ENCODE measurements at regions of chr21 and their contacts with region 1.

Region 1: GRCh38 chr21:42145569-42146272 is 73.2 kb upstream of the ABCG1 start:
- DNase-seq: peak; percentile 57
- H3K4me3 Mint-ChIP-seq: no peak overlapping the region
- H3K27ac Mint-ChIP-seq: no peak overlapping the region
- H3K4me1 Mint-ChIP-seq: no peaks in the 10 kb centered on the region
- H3K27me3 Mint-ChIP-seq: peaks cover 21% of the 10 kb centered on the region
- CTCF ChIP-seq: peak; percentile 91

Region 2: GRCh38 chr21:42025376-42026081 is 120.2 kb before region 1 on chr21:
- CTCF ChIA-PET with region 1: no interaction called
- POLR2A ChIA-PET with region 1: no interaction called
- intact Hi-C with region 1: no loop called
- DNase-seq: no peak
- H3K4me3 Mint-ChIP-seq: no peak overlapping the region
- H3K27ac Mint-ChIP-seq: no peak overlapping the region
- H3K4me1 Mint-ChIP-seq: no peaks in the 10 kb centered on the region
- H3K27me3 Mint-ChIP-seq: peaks cover 37% of the 10 kb centered on the region
- CTCF ChIP-seq: no peak

Region 3: DNA sequence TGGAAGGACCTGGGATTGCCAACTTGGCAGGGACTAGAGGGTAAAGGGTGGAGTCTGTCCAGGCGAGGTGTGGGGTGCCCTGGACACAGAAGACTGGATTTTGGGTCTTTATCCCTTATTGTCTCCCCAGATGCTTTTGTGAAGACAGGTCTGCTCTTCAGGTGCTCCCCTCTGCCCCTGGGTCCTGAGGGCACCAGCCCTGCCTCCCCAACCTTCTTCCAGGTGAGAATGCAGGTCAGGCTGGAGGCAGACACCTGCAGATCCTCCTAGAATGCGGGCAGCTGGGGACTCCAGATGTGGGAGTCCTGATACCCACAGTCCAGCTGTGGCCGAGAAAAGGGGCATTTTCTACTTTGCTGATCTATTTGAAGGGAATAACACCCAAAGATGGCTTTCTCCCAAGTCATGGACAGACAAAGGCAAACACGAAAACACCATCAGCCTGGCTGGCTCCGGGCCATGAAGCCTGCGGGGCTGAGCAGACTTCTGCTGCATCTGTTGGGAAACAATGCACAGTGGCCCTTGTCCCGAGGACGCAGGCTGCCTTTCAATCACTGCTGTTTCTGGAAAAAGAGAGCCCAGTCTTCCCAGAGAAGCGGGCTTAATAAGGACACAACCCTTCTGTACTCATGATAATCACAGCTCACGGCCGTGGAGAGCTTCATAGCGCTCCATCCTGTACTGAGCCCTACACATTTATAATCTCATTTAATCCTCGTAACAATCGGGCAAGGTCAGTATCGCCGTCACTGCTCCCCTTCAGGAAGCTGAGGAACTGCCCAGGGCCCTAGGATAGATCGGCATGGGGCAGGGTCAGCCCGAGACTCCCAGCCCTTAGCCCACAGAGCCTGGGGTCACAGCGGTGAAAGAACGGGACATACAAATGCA is 11.2 kb after region 1 on chr21:
- CTCF ChIA-PET with region 1: interaction called, 25 read pairs
- POLR2A ChIA-PET with region 1: interaction called, 4 read pairs
- intact Hi-C with region 1: no loop called
- DNase-seq: peak; percentile 54
- H3K4me3 Mint-ChIP-seq: no peak overlapping the region
- H3K27ac Mint-ChIP-seq: no peak overlapping the region
- H3K4me1 Mint-ChIP-seq: no peaks in the 10 kb centered on the region
- H3K27me3 Mint-ChIP-seq: no peaks in the 10 kb centered on the region
- CTCF ChIP-seq: no peak

Region 4: DNA sequence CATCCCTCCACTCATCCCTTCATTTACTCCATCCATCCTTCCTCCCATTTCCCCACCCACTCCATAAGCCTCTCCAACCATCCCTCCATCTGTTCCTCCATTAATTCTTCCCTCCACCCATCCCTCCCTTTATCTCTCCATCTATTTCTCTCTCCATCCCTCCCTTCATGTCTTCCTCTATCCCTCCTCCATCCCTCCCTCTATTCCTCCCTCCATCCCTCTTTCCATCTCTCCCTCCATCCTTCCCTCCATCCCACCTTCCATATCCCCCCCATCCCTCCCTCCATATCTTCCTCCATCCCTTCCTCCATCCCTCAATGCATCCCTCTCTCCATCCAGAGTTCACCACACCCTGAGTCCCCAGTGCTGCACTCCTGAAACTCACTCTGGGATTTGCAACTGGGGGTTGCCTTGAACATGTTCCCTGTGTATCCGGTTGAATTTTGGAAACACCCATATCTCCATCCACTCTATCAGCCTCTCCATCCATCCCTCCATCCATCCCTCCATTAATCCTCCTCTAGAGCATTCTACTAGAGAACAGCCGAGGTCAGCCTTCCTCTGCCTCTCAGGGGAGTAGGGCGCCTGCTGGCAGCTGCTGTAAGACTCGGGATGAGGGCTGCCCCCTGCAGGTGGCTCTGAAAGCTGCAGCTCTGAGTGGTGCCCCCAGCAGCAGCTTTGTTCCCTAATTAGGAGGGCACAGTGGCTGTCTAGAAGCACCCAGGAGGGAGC is 112.6 kb after region 1 on chr21:
- CTCF ChIA-PET with region 1: interaction called, 26 read pairs
- POLR2A ChIA-PET with region 1: no interaction called
- intact Hi-C with region 1: loop called (anchors 1 kb)
- DNase-seq: peak; percentile 67
- H3K4me3 Mint-ChIP-seq: no peak overlapping the region
- H3K27ac Mint-ChIP-seq: no peak overlapping the region
- H3K4me1 Mint-ChIP-seq: peaks cover 14% of the 10 kb centered on the region
- H3K27me3 Mint-ChIP-seq: no peaks in the 10 kb centered on the region
- CTCF ChIP-seq: peak; percentile 87

Region 5: GRCh38 chr21:42309753-42310221 is 164.1 kb after region 1 on chr21:
- CTCF ChIA-PET with region 1: interaction called, 6 read pairs
- POLR2A ChIA-PET with region 1: no interaction called
- intact Hi-C with region 1: loop called (anchors 1 kb)
- DNase-seq: peak; percentile 48
- H3K4me3 Mint-ChIP-seq: no peak overlapping the region
- H3K27ac Mint-ChIP-seq: no peak overlapping the region
- H3K4me1 Mint-ChIP-seq: no peaks in the 10 kb centered on the region
- H3K27me3 Mint-ChIP-seq: no peaks in the 10 kb centered on the region
- CTCF ChIP-seq: peak; percentile 72

Region 6: GRCh38 chr21:42381334-42381984 is 235.7 kb after region 1 on chr21:
- CTCF ChIA-PET with region 1: interaction called, 4 read pairs
- POLR2A ChIA-PET with region 1: no interaction called
- intact Hi-C with region 1: loop called (anchors 1 kb)
- DNase-seq: peak; percentile 45
- H3K4me3 Mint-ChIP-seq: no peak overlapping the region
- H3K27ac Mint-ChIP-seq: no peak overlapping the region
- H3K4me1 Mint-ChIP-seq: peaks cover 6% of the 10 kb centered on the region
- H3K27me3 Mint-ChIP-seq: peaks cover 17% of the 10 kb centered on the region
- CTCF ChIP-seq: peak; percentile 43

Region 7: DNA sequence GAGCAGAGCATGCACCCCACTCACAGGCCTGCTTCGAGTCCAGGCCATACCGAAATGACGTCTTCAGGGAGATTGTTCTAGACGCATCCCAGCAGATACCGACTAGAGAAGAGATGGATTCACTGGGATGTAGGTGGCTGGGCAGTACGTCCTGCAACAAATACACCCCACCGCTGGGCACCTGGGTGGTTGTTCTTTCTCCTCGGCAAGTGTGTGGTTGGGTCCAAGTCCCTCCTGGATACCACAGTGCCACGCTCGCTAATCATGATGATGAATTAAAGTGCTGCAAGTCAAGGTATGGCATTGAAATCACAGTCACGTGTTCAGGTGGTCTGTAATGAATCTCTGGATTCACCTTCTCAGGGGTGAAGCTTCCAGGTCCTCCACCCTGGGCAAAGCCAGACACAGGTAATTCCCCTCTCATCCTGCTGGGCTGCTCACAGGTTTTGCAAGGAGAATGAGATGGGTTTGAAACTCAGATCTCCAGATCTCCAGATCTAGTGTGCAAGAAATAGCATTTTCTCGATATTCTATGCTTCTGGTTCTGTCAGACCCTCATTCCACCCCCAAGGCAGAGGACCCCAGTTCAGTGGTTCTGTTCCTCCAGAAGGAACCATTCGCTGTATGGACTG is 303.7 kb after region 1 on chr21:
- CTCF ChIA-PET with region 1: interaction called, 16 read pairs
- POLR2A ChIA-PET with region 1: interaction called, 3 read pairs
- intact Hi-C with region 1: loop called (anchors 1 kb)
- DNase-seq: no peak
- H3K4me3 Mint-ChIP-seq: no peak overlapping the region
- H3K27ac Mint-ChIP-seq: peak overlapping the region; percentile 84
- H3K4me1 Mint-ChIP-seq: no peaks in the 10 kb centered on the region
- H3K27me3 Mint-ChIP-seq: peaks cover 16% of the 10 kb centered on the region
- CTCF ChIP-seq: no peak

Region 8: DNA sequence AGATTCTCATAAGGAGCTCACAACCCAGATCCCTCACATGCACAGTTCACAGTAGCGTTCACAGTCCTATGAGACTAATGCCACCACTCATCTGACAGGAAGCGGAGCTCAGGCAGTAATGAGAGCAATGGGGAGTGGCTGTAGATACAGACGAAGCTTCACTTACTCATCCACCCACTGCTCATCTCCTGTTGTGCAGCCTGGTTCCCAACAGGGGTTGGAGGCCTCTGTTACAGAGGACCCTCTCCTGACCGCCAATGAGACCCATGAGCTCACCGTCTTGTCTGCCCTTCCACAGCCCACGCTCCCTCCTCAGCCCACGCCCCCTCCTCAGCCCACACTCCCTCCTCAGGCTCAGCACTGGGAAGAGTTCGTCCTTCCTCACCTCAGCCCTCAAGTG is 310.7 kb after region 1 on chr21:
- CTCF ChIA-PET with region 1: interaction called, 16 read pairs
- POLR2A ChIA-PET with region 1: no interaction called
- intact Hi-C with region 1: no loop called
- DNase-seq: no peak
- H3K4me3 Mint-ChIP-seq: no peak overlapping the region
- H3K27ac Mint-ChIP-seq: no peak overlapping the region
- H3K4me1 Mint-ChIP-seq: no peaks in the 10 kb centered on the region
- H3K27me3 Mint-ChIP-seq: no peaks in the 10 kb centered on the region
- CTCF ChIP-seq: no peak

Measured in MCF 10A (cell line).